Activated naive CD4-positive, alpha-beta T cell treated with anti-CD3 and anti-CD28 coated beads for 36 hours (primary cell): ENCODE measurements at regions of chr1 and their contacts with region 1.

Region 1: DNA sequence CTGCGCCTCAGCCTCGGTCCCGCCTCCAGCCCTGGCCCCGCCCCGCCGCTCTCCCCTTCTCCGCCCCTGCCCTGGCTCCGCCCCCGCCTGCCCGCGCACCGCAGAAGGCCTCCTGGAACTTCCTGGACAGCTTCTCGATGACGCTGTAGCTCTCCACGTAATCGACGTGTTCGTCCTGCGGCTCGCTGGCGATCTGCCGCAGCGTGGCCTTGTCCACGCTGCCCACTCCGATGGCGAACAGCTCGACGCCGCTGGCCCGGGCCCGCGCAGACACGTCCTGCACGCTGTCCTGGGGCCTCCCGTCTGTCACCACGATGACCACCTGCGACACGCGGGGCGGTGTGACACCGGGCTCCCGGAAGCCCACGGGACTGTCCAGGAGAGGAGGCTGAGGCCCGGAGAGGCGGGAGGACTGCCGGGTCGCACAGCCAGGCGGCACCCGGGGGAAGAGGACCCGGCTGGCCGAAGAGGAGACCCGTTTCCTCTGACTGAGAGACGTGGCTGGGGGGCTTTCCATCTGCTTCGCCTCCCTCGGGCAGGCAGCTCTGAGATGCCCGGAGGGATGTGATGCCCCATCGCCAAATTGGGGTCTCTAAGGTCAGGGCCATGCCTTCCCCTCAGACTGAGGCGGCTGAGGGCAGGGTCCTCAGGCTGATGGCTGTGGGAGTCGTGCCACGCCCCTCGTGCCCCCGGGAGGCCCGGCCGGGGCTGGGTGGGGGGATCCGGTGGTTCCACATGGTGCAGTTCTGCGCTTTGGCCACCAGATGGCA is 4.6 kb downstream of the MATN1 start:
- DNase-seq: peak; percentile 88
- H3K4me3 Mint-ChIP-seq: peak overlapping the region; percentile 94
- H3K27ac Mint-ChIP-seq: peak overlapping the region; percentile 92
- H3K4me1 Mint-ChIP-seq: peaks cover 21% of the 10 kb centered on the region
- H3K27me3 Mint-ChIP-seq: no peaks in the 10 kb centered on the region

Region 2: GRCh38 chr1:30645807-30646206 is 73.0 kb before region 1 on chr1:
- CTCF ChIA-PET with region 1: no interaction called
- intact Hi-C with region 1: no loop called
- DNase-seq: no peak
- H3K4me3 Mint-ChIP-seq: no peak overlapping the region
- H3K27ac Mint-ChIP-seq: no peak overlapping the region
- H3K4me1 Mint-ChIP-seq: peaks cover 12% of the 10 kb centered on the region
- H3K27me3 Mint-ChIP-seq: peaks cover 33% of the 10 kb centered on the region

Region 3: DNA sequence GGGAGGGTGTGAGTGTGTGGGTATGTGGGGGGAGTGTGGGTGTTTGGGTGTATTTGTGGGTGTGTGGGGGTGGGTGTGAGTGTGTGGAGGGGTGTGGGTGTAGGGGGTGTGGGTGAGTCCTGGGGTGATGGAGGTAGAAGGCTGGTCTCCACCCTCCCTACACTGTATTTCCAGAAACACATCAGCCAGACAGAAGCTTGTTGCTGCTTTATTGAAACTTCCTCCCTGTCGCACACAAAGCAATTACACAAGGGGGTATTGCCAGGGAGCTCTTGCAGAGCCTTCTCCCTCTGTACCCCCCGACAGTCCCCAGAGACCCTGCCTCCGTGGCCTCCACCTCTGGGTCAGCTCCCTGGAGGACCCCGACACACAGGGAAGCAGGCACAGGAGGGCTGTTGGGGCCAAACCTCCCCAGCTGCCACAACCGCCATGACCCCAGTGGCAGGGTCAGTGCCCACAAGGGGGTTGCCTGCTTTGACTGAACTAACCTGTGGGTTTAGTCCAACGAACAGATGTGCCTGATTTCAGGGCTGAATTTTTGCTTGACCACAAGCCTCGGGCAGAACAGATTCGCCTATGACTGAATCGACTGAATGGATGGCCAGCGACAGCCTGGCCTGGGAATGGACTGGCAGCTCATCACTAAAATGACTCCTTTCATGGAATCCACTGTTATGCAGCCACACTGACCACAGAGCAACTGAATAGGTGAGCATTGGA is 13.6 kb after region 1 on chr1:
- CTCF ChIA-PET with region 1: interaction called, 25 read pairs
- intact Hi-C with region 1: no loop called
- DNase-seq: no peak
- H3K4me3 Mint-ChIP-seq: no peak overlapping the region
- H3K27ac Mint-ChIP-seq: peak overlapping the region; percentile 79
- H3K4me1 Mint-ChIP-seq: peaks cover 10% of the 10 kb centered on the region
- H3K27me3 Mint-ChIP-seq: no peaks in the 10 kb centered on the region

Region 4: DNA sequence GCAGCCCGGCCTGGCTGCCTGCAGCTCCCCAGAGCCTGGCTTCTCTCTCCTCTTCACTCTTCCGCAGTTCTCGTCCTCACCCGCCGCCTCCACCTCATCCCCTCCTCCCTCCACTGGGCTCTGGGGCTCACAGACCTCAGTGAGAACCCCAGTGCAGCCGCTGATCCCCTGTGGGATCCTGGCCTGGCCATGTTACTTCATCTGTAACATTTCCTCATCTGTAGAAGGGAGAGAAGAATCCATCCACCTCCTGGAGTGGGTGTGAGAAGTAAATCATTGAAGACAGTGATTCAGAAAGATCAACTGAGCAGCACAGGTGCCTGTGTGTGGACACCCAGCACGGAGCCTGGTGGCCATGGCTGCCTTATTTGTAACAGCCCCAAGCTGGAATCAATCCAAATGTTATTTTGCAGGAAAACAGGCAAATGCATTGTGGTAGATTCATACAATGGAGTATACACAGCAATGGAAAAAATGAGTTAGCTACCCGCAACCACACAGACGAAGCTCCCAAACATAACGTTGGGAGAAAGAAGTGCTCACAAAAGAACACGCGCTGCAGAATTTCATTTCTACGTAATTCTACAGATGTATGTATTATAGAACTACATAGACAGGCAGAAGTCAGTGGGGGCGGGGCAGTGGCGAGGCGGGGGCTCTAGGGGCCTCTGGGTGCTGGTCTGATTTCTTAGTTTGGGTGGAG is 30.0 kb after region 1 on chr1:
- CTCF ChIA-PET with region 1: interaction called, 16 read pairs
- intact Hi-C with region 1: loop called (anchors 1 kb)
- DNase-seq: peak; percentile 62
- H3K4me3 Mint-ChIP-seq: peak overlapping the region; percentile 82
- H3K27ac Mint-ChIP-seq: peak overlapping the region; percentile 100
- H3K4me1 Mint-ChIP-seq: peaks cover 98% of the 10 kb centered on the region
- H3K27me3 Mint-ChIP-seq: no peaks in the 10 kb centered on the region

Region 5: DNA sequence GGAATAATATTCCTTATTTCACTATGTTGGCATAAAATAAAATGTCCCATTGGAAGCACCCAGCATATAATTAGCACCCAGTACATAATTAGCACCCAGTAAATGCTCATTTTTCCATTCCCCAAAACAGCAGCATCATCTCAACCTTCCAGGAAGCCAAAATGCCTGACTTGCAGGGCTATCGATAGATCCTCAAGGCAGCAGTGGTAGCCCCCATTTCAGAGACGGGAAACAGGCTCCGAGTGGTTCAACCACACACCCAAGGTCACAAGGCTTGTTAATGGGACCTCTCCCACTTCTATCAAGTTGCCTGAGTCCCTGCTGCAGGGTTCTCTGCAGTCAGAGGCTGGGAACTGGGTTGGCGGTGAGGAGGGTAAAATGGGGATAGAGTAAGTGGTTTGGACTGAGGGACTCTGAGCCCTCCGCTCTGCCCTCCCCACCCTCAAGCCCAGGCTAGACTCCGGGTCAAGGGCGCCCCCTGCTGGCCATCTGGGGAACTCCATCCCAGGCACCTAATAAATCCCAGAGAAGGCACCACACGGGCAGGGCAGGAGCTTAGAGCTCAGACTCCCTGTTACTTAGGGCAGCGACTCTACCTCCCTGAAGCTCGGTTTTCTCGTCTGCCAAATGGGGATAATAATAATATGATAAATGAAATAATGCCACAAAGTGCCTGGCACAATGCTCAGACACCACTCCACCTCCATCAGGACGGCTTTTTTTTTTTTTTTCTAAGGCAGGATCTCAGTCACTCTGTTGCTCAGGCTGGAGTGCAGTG is 60.7 kb after region 1 on chr1:
- CTCF ChIA-PET with region 1: interaction called, 355 read pairs
- intact Hi-C with region 1: loop called (anchors 1 kb)
- DNase-seq: peak; percentile 96
- H3K4me3 Mint-ChIP-seq: no peak overlapping the region
- H3K27ac Mint-ChIP-seq: no peak overlapping the region
- H3K4me1 Mint-ChIP-seq: peaks cover 11% of the 10 kb centered on the region
- H3K27me3 Mint-ChIP-seq: no peaks in the 10 kb centered on the region

Region 6: GRCh38 chr1:30868833-30869435 is 150.1 kb after region 1 on chr1:
- CTCF ChIA-PET with region 1: no interaction called
- intact Hi-C with region 1: no loop called
- DNase-seq: no peak
- H3K4me3 Mint-ChIP-seq: no peak overlapping the region
- H3K27ac Mint-ChIP-seq: no peak overlapping the region
- H3K4me1 Mint-ChIP-seq: no peaks in the 10 kb centered on the region
- H3K27me3 Mint-ChIP-seq: no peaks in the 10 kb centered on the region

Region 7: GRCh38 chr1:30911046-30911954 is 192.5 kb after region 1 on chr1:
- CTCF ChIA-PET with region 1: interaction called, 16 read pairs
- intact Hi-C with region 1: loop called (anchors 1 kb)
- DNase-seq: peak; percentile 76
- H3K4me3 Mint-ChIP-seq: no peak overlapping the region
- H3K27ac Mint-ChIP-seq: no peak overlapping the region
- H3K4me1 Mint-ChIP-seq: peaks cover 12% of the 10 kb centered on the region
- H3K27me3 Mint-ChIP-seq: peaks cover 29% of the 10 kb centered on the region

Region 8: DNA sequence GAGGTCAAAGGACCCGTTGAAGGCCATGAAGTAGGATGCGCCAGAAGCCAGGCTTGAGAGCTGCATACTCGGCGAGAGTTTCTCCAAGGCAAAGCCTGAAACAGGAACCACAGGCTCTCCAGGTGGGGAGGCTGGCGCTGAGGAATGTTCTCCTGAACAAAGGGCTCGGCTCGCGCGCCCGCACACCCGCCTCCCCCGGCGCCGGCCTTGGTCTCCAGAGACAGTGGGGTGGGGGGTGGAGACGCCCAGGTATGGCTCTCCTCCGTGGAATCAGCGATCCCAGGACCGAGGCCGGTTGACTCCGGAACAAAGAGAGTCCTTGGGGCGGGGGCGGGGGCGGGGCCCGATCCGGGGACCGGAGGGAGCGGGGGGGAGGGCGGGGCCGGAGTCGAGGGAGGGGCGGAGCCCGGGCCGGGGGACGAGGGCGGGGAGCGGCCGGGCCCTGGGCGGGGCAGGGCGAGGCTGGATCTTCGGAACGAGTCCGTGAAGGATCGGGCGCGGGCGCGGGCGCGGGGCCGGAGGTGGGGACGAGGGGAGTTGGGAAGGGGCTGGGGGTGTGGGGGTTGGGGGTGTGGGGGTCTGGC is 435.9 kb after region 1 on chr1:
- CTCF ChIA-PET with region 1: no interaction called
- intact Hi-C with region 1: loop called (anchors 1 kb)
- DNase-seq: peak; percentile 71
- H3K4me3 Mint-ChIP-seq: peak overlapping the region; percentile 80
- H3K27ac Mint-ChIP-seq: no peak overlapping the region
- H3K4me1 Mint-ChIP-seq: peaks cover 7% of the 10 kb centered on the region
- H3K27me3 Mint-ChIP-seq: no peaks in the 10 kb centered on the region